Caco-2 (cell line): ENCODE measurements at regions of chr1 and their contacts with region 1.

Region 1: GRCh38 chr1:196209983-196210382 is 398.3 kb downstream of the KCNT2 start:
- DNase-seq: no peak
- H3K4me3 ChIP-seq: no peak overlapping the region
- H3K4me3 Mint-ChIP-seq: no peak overlapping the region
- H3K27ac Mint-ChIP-seq: no peak overlapping the region
- H3K4me1 ChIP-seq: no peaks in the 10 kb centered on the region
- H3K4me1 Mint-ChIP-seq: no peaks in the 10 kb centered on the region
- H3K27me3 ChIP-seq: no peaks in the 10 kb centered on the region
- H3K27me3 Mint-ChIP-seq: no peaks in the 10 kb centered on the region
- CTCF ChIP-seq: no peak

Region 2: DNA sequence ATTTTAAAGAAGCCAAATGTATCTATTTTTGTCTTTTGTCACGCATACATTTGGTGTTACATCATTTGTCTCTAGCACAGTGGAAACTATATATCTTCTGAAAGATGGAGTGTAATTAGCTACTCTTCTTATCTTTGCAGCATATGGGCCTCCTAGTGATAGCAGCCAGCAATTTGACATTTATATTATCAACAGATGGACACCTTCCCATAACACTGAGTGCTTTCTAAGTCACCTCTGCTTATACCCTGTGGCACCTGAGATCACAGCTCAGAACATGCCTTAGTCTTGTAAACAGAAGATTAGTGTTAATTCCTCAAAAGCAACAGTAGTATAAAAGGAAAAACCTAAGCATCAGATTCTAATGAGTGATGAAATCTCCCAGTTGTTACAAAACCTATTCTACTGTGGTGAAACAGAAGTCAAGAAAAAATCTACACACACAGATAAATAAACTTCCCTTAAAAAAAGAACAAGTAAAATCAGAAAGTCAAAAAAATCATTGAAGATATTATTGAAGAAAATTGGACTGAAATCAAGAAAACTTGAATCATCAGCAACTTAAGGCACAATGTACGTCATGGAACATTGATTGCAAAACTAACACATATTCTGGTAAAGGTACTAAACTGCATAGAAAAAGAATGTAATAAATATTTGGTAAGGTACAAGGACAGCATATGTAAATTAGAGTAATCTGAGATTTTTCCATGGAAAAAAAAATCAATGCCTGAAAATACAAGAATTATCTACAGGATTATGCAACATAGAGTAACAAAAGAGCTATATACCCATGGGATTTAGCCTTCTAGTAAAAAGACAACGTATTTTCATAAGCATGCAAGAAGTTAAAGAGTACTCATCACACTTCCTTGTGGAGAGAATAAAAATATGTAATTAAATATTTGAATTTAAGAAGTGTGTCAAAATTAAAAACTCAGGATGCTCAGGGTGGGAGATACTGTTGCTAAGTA is 336.6 kb after region 1 on chr1:
- CTCF ChIA-PET with region 1: no interaction called
- POLR2A ChIA-PET with region 1: no interaction called
- intact Hi-C with region 1: no loop called
- DNase-seq: no peak
- H3K4me3 ChIP-seq: no peak overlapping the region
- H3K4me3 Mint-ChIP-seq: no peak overlapping the region
- H3K27ac Mint-ChIP-seq: no peak overlapping the region
- H3K4me1 ChIP-seq: no peaks in the 10 kb centered on the region
- H3K4me1 Mint-ChIP-seq: no peaks in the 10 kb centered on the region
- H3K27me3 ChIP-seq: no peaks in the 10 kb centered on the region
- H3K27me3 Mint-ChIP-seq: no peaks in the 10 kb centered on the region
- CTCF ChIP-seq: no peak

Region 3: GRCh38 chr1:197541411-197541810 is 1331.4 kb after region 1 on chr1:
- CTCF ChIA-PET with region 1: no interaction called
- POLR2A ChIA-PET with region 1: no interaction called
- intact Hi-C with region 1: loop called (anchors 10 kb)
- DNase-seq: no peak
- H3K4me3 ChIP-seq: no peak overlapping the region
- H3K4me3 Mint-ChIP-seq: no peak overlapping the region
- H3K27ac Mint-ChIP-seq: no peak overlapping the region
- H3K4me1 ChIP-seq: no peaks in the 10 kb centered on the region
- H3K4me1 Mint-ChIP-seq: no peaks in the 10 kb centered on the region
- H3K27me3 ChIP-seq: no peaks in the 10 kb centered on the region
- H3K27me3 Mint-ChIP-seq: no peaks in the 10 kb centered on the region
- CTCF ChIP-seq: no peak